Ascending aorta (tissue), 2 donors: ENCODE measurements at regions of chr15 and their contacts with region 1.

Region 1: GRCh38 chr15:79028411-79028964 is 62.1 kb downstream of the RASGRF1 start:
- DNase-seq: no peak
- H3K4me3 ChIP-seq: no peak overlapping the region
- H3K27ac ChIP-seq: no peak overlapping the region
- H3K4me1 ChIP-seq: no peaks in the 10 kb centered on the region
- H3K27me3 ChIP-seq: no peaks in the 10 kb centered on the region
- CTCF ChIP-seq: peak; percentile 43 to 59 (median 48)

Region 2: DNA sequence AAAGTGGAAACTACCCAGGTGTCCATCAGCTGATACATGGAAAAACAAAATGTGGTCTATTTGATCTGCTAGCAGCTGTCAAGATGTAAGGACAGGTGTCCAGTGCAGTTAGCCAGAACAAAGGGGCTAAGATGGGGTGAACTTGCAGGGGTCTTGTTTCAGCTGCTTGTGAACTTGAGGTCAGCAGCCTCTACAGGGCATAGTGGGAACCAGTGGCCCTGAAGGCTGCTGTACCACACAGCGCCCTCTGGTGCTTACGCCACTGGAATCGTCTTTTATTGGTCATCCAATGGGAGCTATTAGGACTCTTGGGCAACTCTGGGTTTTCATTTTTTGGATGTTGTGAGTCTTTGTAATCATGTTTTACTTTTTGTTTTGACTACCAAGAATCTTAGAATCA is 21.4 kb before region 1 on chr15:
- intact Hi-C with region 1: no loop called
- DNase-seq: no peak
- H3K4me3 ChIP-seq: no peak overlapping the region
- H3K27ac ChIP-seq: no peak overlapping the region
- H3K4me1 ChIP-seq: no peaks in the 10 kb centered on the region
- H3K27me3 ChIP-seq: no peaks in the 10 kb centered on the region
- CTCF ChIP-seq: peak in 2 of 3 experiments; percentile 29 to 41

Region 3: GRCh38 chr15:79184465-79184892 is 156.0 kb after region 1 on chr15:
- intact Hi-C with region 1: loop called (anchors 10 kb)
- DNase-seq: peak; percentile 17 to 78
- H3K4me3 ChIP-seq: no peak overlapping the region
- H3K27ac ChIP-seq: no peak overlapping the region
- H3K4me1 ChIP-seq: no peaks in the 10 kb centered on the region
- H3K27me3 ChIP-seq: no peaks in the 10 kb centered on the region
- CTCF ChIP-seq: peak; percentile 69 to 99 (median 88)